GM18951 (cell line): ENCODE measurements at regions of chr3 and their contacts with region 1.

Region 1: DNA sequence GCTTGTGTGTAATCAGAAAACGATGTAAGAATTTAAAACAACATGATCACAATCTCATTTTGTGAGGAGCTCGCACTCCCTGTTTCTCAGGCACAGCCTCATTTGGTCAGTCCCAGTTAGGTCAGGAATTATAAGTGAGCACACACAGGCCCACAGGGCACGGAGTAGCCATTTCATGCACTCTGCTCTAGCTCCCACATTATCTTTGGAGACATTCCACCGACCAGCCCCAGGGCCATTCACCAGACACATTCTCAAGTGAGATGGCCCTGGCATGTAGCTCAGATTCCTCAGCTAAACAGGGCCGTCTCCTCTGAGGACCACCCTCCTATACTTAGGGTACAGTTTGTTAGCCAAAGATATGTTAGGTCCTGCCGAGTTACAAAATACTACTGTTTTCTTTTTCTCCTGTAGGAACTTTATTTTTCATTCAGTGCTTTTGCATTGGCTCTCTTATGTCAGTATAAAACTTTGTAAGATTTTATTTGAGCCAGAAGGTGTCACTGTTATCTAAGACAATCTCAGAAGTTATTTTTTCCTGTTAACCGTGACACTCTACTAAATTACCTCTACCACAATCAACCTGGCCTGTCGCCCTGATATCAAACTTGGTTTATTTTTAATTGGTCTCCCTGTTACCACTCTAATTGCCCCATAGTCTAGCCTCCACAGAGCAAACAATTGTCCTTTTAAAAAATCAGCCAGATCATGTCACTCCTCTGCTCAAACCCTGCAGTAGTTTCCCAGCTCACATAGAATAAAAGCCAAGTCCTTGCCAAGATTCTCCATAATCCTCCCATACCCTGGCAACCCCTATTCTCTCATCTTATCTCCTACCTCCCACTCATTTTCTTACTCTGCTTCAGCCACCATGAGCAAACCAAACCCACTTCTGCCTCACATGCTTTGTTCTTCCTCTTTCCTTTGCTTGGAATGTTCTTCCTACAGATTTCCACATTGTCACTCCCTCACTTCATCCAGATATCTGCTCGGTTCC is 105.7 kb downstream of the PPP2R3A start:
- POLR2A ChIP-seq: no peak

Region 2: GRCh38 chr3:136752422-136753325 is 681.4 kb after region 1 on chr3:
- in situ Hi-C with region 1: loop called (anchors 5 kb)
- POLR2A ChIP-seq: peak; percentile 78

Region 3: DNA sequence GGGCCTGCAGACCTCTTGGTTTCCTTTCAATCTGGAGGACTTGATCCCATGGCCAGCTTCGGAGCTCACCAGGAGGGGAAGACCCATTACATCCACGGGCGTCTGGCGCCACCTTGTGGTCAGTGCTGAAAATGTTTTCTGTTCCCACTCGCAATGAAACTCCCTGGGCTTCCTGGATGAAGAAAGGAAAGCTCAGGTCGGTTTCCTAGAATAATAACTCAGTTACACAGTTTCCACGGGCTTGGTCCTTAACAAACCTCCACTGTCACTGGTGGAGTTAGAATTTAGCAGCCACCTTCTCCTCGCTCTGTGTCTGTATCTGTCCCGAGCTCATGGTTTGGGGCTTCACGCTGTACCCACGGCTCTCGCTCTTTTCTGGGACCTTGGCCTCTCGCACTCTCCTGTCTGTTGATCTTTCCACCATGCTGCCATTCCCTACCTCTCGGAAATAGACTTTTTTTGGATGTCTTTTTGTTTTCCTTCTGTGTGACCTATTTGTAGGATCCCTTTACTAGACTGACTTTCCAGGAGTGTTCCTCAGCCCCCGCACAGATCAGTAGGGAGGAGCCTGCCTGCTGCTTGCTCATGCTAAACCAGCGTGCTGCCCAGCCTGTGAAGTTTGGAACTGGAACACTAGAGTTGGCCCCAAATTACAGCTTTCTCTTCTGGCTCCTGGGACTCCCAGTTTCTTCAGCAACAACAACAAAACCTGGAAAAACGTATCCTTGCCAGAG is 942.9 kb after region 1 on chr3:
- in situ Hi-C with region 1: loop called (anchors 5 kb)
- POLR2A ChIP-seq: no peak